ENCODE measurements at regions of chr4 and their contacts with region 1.

Region 1: DNA sequence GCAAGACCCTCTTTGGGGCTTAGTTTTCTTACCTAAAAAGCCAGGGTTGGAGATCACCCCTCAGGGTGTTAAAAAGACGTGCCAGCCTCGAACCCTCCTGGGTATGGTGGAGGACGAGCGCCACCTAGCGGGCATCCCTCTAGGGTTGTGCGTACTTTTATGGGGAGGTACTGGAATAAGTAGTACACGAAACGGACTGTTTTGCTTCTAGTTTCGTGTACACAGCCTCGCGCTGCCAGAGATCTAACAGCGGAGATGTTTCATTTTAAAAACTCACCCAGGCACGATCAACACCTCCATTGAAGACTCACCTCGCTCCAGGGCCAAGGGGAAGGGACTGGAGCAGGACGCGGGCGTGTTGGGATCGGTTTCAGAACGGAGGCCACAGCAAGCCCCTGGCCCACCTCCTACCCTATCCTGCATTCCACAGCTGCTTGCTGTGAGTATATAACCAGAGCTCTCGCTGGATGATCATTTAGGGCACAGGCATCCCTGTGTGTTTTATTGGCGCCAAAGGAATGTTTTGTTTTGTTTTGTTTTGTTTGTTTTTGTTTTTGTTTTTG is 4.8 kb upstream of the NKX3-2 start:
- DNase-seq: peak; percentile 92
- H3K4me3 ChIP-seq: peak overlapping the region in 3 of 4 donors; percentile 27 to 47 (median 42)
- H3K27ac ChIP-seq: peak overlapping the region in 2 of 4 donors; percentile 94 to 96
- H3K4me1 ChIP-seq: peaks cover 0 to 49% (median 36%) of the 10 kb centered on the region in 4 donors
- H3K27me3 ChIP-seq: peaks cover 3 to 45% (median 16%) of the 10 kb centered on the region in 3 donors
- CTCF ChIP-seq: peak; percentile 80 to 88 (median 86)
- EP300 ChIP-seq: no peak
- POLR2A ChIP-seq: no peak

Region 2: DNA sequence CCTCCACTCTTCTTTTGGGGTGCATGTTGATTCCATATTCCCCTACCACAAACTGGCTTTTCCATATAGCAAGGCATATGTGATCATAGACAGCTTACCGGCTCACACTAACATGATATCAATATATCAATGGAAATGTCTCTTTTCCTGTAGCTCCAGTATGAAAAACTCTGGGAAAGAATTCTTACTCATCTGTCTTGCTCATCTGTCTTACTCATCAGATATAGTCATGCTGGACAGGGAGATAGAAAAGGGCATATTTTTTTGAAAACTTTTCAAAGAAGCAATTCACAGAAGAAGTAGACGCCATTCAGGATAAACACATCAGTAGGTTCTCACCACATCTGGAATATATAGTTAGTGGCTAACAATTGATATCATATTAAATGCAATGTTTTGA is 859.6 kb before region 1 on chr4:
- intact Hi-C with region 1: no loop called
- DNase-seq: no peak
- H3K4me3 ChIP-seq: no peak overlapping the region
- H3K27ac ChIP-seq: no peak overlapping the region
- H3K4me1 ChIP-seq: no peaks in the 10 kb centered on the region
- H3K27me3 ChIP-seq: no peaks in the 10 kb centered on the region
- CTCF ChIP-seq: no peak
- EP300 ChIP-seq: no peak
- POLR2A ChIP-seq: no peak

Region 3: GRCh38 chr4:12729384-12729783 is 819.7 kb before region 1 on chr4:
- intact Hi-C with region 1: loop called (anchors 2 kb)
- DNase-seq: no peak
- H3K4me3 ChIP-seq: no peak overlapping the region
- H3K27ac ChIP-seq: no peak overlapping the region
- H3K4me1 ChIP-seq: no peaks in the 10 kb centered on the region
- H3K27me3 ChIP-seq: no peaks in the 10 kb centered on the region
- CTCF ChIP-seq: peak in 1 of 4 experiments; percentile 43
- EP300 ChIP-seq: no peak
- POLR2A ChIP-seq: no peak

Region 4: DNA sequence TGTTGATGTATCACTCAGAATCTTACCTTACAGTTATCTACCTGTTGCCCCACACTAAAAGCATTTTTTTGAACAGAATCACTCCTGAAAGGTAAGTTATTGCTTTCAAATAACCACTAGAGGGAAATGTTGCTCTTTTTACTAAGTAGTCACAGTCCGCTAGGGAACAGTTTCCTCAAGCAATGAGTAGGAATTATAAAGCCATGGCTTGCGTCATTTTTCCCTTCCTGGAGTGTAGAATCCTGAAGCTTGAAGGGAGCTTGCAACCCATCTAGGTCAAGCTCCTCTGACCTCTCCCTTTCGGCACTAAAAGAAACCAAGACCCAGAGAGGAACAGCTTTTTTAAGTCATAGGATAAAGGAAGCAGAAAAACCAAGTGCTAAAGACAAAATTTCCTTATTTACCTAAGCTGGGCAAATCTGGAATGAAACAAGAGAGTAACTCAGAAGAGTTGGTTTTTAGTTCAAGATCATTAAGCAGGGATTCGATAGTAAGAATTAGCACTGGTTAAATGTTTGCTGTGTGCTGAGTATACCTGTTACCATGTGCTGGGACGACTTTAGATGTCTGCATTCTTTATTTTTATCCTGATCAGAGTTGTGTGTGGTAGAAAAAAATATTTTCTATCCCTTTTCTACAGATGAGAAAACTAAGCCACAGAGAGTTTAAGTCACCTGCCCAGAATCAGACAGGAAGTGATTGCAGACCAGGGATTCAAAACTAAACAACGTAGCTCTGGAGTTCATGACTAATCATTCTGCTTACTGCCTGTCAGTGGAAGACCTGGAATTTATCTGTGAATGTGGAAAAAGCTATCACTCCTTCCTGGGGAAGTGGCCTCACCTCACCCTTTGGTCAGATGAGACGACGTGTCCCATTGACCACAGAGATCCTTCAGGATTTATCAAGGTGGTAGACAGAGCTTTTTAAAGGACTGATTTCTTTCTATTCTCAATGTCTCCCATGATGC is 696.4 kb before region 1 on chr4:
- intact Hi-C with region 1: loop called (anchors 1 kb)
- DNase-seq: no peak
- H3K4me3 ChIP-seq: no peak overlapping the region
- H3K27ac ChIP-seq: peak overlapping the region in 3 of 4 donors; percentile 13 to 58 (median 44)
- H3K4me1 ChIP-seq: peaks cover 0 to 9% (median 5%) of the 10 kb centered on the region in 4 donors
- H3K27me3 ChIP-seq: no peaks in the 10 kb centered on the region
- CTCF ChIP-seq: peak; percentile 66 to 75 (median 70)
- EP300 ChIP-seq: no peak
- POLR2A ChIP-seq: no peak

Region 5: GRCh38 chr4:12979797-12980196 is 569.3 kb before region 1 on chr4:
- intact Hi-C with region 1: loop called (anchors 2 kb)
- DNase-seq: peak; percentile 81
- H3K4me3 ChIP-seq: no peak overlapping the region
- H3K27ac ChIP-seq: peak overlapping the region in 3 of 4 donors; percentile 63 to 65 (median 65)
- H3K4me1 ChIP-seq: peaks cover 0 to 20% (median 12%) of the 10 kb centered on the region in 4 donors
- H3K27me3 ChIP-seq: no peaks in the 10 kb centered on the region
- CTCF ChIP-seq: no peak
- EP300 ChIP-seq: peak in 1 of 4 donors; percentile 51
- POLR2A ChIP-seq: no peak

Region 6: GRCh38 chr4:13084210-13084609 is 464.9 kb before region 1 on chr4:
- intact Hi-C with region 1: loop called (anchors 10 kb)
- DNase-seq: no peak
- H3K4me3 ChIP-seq: no peak overlapping the region
- H3K27ac ChIP-seq: no peak overlapping the region
- H3K4me1 ChIP-seq: peaks cover 0 to 25% (median 11%) of the 10 kb centered on the region in 4 donors
- H3K27me3 ChIP-seq: no peaks in the 10 kb centered on the region
- CTCF ChIP-seq: no peak
- EP300 ChIP-seq: no peak
- POLR2A ChIP-seq: no peak

Region 7: DNA sequence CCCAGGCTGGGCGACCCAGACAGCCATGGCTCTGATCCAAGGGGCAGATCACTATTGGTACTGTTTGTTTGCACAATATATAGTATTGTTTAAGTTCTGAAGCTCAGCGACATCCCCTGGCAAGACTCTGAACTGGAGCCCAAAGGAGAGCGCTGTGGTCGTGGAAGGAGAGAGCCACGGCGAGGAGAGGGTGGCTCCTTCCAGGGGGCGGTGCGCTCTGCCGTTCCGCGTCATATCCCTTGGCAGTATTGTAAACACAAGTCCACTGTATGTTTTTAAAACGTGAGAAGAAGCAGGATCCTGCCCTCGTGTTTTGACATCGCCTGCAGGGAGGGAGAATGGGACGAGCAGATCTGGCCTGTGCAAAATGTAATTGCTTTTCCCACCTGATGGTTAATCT is 250.4 kb before region 1 on chr4:
- intact Hi-C with region 1: loop called (anchors 2 kb)
- DNase-seq: peak; percentile 95
- H3K4me3 ChIP-seq: peak overlapping the region in 3 of 4 donors; percentile 30 to 40 (median 38)
- H3K27ac ChIP-seq: peak overlapping the region in 3 of 4 donors; percentile 84 to 87 (median 84)
- H3K4me1 ChIP-seq: peaks cover 0 to 40% (median 26%) of the 10 kb centered on the region in 4 donors
- H3K27me3 ChIP-seq: no peaks in the 10 kb centered on the region
- CTCF ChIP-seq: peak in 1 of 4 experiments; percentile 29
- EP300 ChIP-seq: peak; percentile 84 to 95 (median 86)
- POLR2A ChIP-seq: no peak

Region 8: DNA sequence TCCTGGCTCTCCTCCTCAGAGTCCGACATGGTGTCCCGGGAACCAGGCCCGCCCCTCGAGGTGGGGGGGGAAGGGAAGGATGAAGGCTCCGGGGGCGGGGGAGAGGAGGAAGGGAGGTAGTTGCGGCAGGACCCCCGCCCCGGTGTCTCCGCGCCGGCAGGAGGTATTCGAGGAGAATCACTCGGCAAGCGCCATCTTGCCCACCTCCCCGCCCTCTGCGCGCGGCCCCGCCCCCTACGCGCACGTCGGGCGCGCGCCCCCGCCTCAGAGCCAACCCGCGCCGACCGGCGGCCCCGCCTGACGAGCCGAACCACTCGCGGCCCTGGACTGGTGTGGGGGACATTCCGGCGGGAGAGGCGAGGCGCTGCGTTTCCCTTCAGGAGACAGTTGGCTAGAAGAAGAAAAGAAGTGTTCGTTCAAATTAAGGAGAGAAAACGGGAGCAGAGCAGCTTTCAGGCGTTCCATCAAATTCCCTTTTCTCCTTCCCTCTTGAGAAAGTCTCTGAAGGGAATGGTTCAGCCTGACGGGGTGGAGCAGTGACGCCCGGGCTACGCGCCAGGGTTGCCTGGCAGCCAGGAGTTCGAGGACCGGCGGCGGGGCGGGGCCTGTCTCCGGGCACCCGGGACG is 64.8 kb before region 1 on chr4 and contains the start of gene RAB28:
- intact Hi-C with region 1: loop called (anchors 2 kb)
- DNase-seq: peak; percentile 98
- H3K4me3 ChIP-seq: peak within 1 kb of the TSS; percentile 80 to 92 (median 90)
- H3K27ac ChIP-seq: peak within 1 kb of the TSS; percentile 95 to 97 (median 96)
- H3K4me1 ChIP-seq: peaks cover 0 to 33% (median 17%) of the 10 kb centered on the region in 4 donors
- H3K27me3 ChIP-seq: no peaks in the 10 kb centered on the region
- CTCF ChIP-seq: no peak
- EP300 ChIP-seq: no peak
- POLR2A ChIP-seq: peak; percentile 45 to 68
- total RNA-seq, gene RAB28: 24.1 to 32.1 (median 28.7) TPM